ENCODE measurements at regions of chr22 and their contacts with region 1.

Region 1: DNA sequence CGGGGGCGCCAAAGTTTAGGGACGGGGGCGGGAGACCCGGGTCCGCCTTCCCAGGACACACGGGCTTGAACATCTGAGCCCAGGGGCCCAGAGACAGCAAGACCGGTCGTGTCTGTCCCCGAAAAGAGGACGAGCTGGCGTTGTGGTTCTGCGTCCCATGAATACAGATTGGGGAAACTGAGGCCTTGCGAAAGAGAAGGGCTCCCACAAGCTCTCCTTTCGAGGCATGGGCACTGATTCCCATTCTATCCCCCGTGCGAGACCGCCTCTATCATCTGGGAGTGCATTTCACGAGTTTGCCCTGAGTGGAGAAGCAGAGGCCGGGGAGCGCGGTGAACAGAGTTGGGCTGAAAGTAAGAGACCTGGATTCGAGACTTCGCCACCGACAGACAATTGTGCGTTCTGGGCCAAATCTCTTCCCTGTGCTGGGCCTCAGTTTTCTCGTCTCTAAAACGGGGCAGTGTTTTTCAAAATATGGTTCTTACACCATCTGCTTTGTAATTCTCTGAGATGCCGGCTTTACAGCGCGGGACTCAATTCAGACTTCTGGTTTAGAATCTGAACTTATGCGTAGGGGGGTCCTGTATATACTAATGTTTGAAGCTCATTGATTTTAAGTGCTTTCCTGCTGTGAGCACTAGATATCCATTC is 471 bp downstream of the RNF185 start:
- DNase-seq: peak in 3 of 5 donors; percentile 2 to 14 (median 12)
- H3K4me3 ChIP-seq: peak overlapping the region; percentile 71 to 90
- H3K4me3 Mint-ChIP-seq: peak overlapping the region; percentile 96 to 100 (median 99)
- H3K27ac ChIP-seq: peak overlapping the region; percentile 79
- H3K27ac Mint-ChIP-seq: peak overlapping the region; percentile 89 to 100 (median 99)
- H3K4me1 ChIP-seq: peaks cover 23% of the 10 kb centered on the region
- H3K4me1 Mint-ChIP-seq: peaks cover 25 to 46% (median 31%) of the 10 kb centered on the region in 4 donors
- H3K27me3 ChIP-seq: no peaks in the 10 kb centered on the region
- H3K27me3 Mint-ChIP-seq: peaks cover 0 to 1% of the 10 kb centered on the region in 2 donors

Region 2: GRCh38 chr22:31107178-31107893 is 53.1 kb before region 1 on chr22 and contains the start of gene SELENOM:
- CTCF ChIA-PET with region 1: no interaction called
- POLR2A ChIA-PET with region 1: interaction called, 11 read pairs
- intact Hi-C with region 1: loop called (anchors 5 kb)
- DNase-seq: peak; percentile 84 to 90 (median 85)
- H3K4me3 ChIP-seq: peak within 1 kb of the TSS; percentile 80 to 97
- H3K4me3 Mint-ChIP-seq: peak within 1 kb of the TSS; percentile 89 to 97 (median 94)
- H3K27ac ChIP-seq: peak within 1 kb of the TSS; percentile 62
- H3K27ac Mint-ChIP-seq: peak within 1 kb of the TSS; percentile 86 to 96 (median 94)
- H3K4me1 ChIP-seq: peaks cover 20% of the 10 kb centered on the region
- H3K4me1 Mint-ChIP-seq: peaks cover 17 to 31% (median 24%) of the 10 kb centered on the region in 4 donors
- H3K27me3 ChIP-seq: no peaks in the 10 kb centered on the region
- H3K27me3 Mint-ChIP-seq: no peaks in the 10 kb centered on the region
- total RNA-seq, gene SELENOM: 64.2 to 68.6 TPM